Astrocyte of the cerebellum (primary cell): ENCODE measurements at regions of chr1 and their contacts with region 1.

Region 1: GRCh38 chr1:6880951-6881690 is 95.9 kb downstream of the CAMTA1 start:
- DNase-seq: no peak
- H3K4me3 ChIP-seq: no peak overlapping the region
- CTCF ChIP-seq: no peak

Region 2: GRCh38 chr1:6801966-6802365 is 79.2 kb before region 1 on chr1:
- in situ Hi-C with region 1: loop called (anchors 5 kb)
- DNase-seq: no peak
- H3K4me3 ChIP-seq: no peak overlapping the region
- CTCF ChIP-seq: no peak

Region 3: DNA sequence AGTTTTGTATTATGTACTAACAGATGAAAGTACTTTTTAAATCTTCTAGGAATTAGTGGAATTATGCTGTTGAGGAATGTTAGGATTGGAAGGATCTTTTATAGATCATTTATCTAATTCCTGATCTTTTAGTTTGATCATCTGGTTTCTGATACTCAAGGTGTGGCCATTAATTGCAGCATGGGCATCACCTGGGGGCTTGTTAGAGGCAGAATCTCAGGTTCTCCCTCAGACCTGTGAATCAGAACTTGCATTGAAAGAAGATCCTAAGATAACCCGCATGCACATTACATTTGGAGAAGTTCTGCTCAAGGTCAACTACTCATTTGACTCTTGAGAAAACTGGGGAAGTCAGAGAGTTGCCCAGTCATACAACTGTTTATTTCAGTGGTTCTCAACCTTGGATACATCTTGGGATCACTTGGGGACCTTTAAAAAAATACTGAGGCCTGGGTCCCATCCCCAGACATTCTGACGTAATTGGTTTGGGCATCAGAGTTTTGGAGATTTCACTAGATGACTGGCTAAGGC is 65.5 kb before region 1 on chr1:
- in situ Hi-C with region 1: no loop called
- DNase-seq: no peak
- H3K4me3 ChIP-seq: no peak overlapping the region
- CTCF ChIP-seq: no peak

Region 4: DNA sequence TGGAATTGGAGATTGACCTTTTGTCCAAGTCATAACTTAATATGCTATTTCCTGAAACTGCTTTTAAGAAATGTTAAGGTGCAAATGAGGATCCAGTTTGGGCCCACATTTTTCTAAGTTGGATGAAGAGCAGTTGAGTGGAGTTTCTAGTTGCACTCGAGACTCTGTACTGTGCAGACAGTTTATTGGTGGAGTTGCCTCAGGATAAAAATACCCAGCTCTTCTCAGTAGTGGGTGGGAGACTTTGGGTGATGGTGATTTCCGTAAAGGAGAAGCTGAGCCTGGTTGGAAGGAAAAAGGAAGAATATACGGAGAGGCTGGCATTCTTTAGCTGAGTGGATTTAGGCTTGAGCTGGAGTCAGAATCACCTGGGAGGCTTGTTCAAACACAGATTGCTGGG is 46.0 kb before region 1 on chr1:
- in situ Hi-C with region 1: loop called (anchors 5 kb)
- DNase-seq: no peak
- H3K4me3 ChIP-seq: no peak overlapping the region
- CTCF ChIP-seq: no peak